ENCODE measurements at regions of chr15 and their contacts with region 1.

Region 1: GRCh38 chr15:68789534-68790241 is 31.0 kb downstream of the ANP32A start:
- DNase-seq: no peak
- H3K4me3 ChIP-seq: no peak overlapping the region
- H3K27ac ChIP-seq: peak overlapping the region in 2 of 4 donors; percentile 35 to 45
- H3K4me1 ChIP-seq: peaks cover 63 to 97% (median 69%) of the 10 kb centered on the region in 3 donors
- H3K27me3 ChIP-seq: no peaks in the 10 kb centered on the region
- CTCF ChIP-seq: no peak
- POLR2A ChIP-seq: no peak

Region 2: GRCh38 chr15:68820295-68821189 is 30.9 kb after region 1 on chr15 and contains the start of gene ANP32A:
- intact Hi-C with region 1: loop called (anchors 5 kb)
- DNase-seq: peak; percentile 53
- H3K4me3 ChIP-seq: peak within 1 kb of the TSS; percentile 83 to 98 (median 91)
- H3K27ac ChIP-seq: peak within 1 kb of the TSS; percentile 93 to 98 (median 97)
- H3K4me1 ChIP-seq: peaks cover 14 to 31% (median 20%) of the 10 kb centered on the region in 3 donors
- H3K27me3 ChIP-seq: no peaks in the 10 kb centered on the region
- CTCF ChIP-seq: no peak
- POLR2A ChIP-seq: peak in 2 of 4 donors; percentile 33 to 78
- total RNA-seq, gene ANP32A: 40.1 to 71.5 (median 43.8) TPM